B cell (primary cell): ENCODE measurements at regions of chr19 and their contacts with region 1.

Region 1: DNA sequence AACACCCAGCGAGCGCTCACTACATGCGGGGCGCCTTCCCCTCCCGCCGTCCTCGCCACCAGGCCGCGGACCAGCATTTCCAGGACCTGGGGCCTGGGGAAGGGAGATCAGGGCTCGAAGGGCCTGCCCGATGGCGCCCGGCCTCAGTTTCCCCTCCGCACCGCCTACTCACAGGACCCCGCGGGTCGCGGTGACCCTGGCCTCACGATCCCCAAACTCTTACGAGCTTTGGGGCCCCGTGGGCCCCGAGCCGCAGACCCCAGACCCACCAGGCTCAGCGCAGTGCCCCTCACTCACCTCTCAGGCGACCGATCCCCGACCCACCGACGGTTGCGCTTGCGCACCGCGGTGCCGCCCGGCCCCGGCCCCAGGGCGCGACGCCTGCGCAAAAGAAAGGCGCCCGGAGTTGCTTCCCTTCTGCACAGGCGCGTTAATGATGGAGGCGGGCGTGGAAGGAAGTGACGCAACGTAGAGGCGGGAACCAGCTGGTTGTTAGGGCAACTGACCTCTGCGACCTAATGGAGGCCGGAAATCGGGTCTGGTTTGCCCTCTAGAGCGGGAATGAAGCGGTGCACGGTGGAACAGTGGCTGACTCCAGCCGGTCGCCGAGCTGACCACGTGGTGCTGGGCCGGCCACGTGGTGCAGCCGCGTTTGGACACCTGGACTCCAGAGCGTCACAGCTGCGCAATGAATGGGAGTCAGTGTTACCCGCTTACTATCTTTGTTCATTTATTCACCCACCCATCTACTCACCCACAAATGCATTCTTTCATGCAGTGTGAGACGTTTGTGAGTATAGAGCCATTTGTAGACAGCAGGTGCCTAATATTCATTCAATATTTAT is at the start of gene SGTA:
- DNase-seq: peak; percentile 98
- ATAC-seq: peak; percentile 67
- H3K4me3 ChIP-seq: peak within 1 kb of the TSS; percentile 62 to 99 (median 93)
- H3K4me3 Mint-ChIP-seq: peak within 1 kb of the TSS; percentile 91
- H3K27ac ChIP-seq: peak within 1 kb of the TSS; percentile 83 to 95
- H3K27ac Mint-ChIP-seq: peak within 1 kb of the TSS; percentile 97
- H3K4me1 ChIP-seq: peaks cover 23 to 39% of the 10 kb centered on the region in 2 donors
- H3K4me1 Mint-ChIP-seq: peaks cover 60% of the 10 kb centered on the region
- H3K27me3 ChIP-seq: no peaks in the 10 kb centered on the region
- H3K27me3 Mint-ChIP-seq: no peaks in the 10 kb centered on the region
- CTCF ChIP-seq: peak; percentile 59
- total RNA-seq, gene SGTA: 36.6 and 39.8 TPM in 2 replicates

Region 2: GRCh38 chr19:2427429-2428320 is 355.5 kb before region 1 on chr19 and contains the start of gene TIMM13:
- CTCF ChIA-PET with region 1: no interaction called
- POLR2A ChIA-PET with region 1: interaction called, 3 read pairs
- intact Hi-C with region 1: loop called (anchors 1 kb)
- DNase-seq: peak; percentile 99
- ATAC-seq: peak; percentile 93
- H3K4me3 ChIP-seq: peak within 1 kb of the TSS; percentile 57 to 90 (median 74)
- H3K4me3 Mint-ChIP-seq: peak within 1 kb of the TSS; percentile 96
- H3K27ac ChIP-seq: peak within 1 kb of the TSS; percentile 75 to 80
- H3K27ac Mint-ChIP-seq: peak within 1 kb of the TSS; percentile 98
- H3K4me1 ChIP-seq: peaks cover 15 to 21% of the 10 kb centered on the region in 2 donors
- H3K4me1 Mint-ChIP-seq: peaks cover 13% of the 10 kb centered on the region
- H3K27me3 ChIP-seq: no peaks in the 10 kb centered on the region
- H3K27me3 Mint-ChIP-seq: no peaks in the 10 kb centered on the region
- CTCF ChIP-seq: no peak
- total RNA-seq, gene TIMM13: 31.9 and 32.5 TPM in 2 replicates

Region 3: GRCh38 chr19:2663920-2664571 is 119.1 kb before region 1 on chr19:
- CTCF ChIA-PET with region 1: interaction called, 3 read pairs
- POLR2A ChIA-PET with region 1: no interaction called
- intact Hi-C with region 1: loop called (anchors 1 kb)
- DNase-seq: peak; percentile 95
- ATAC-seq: peak; percentile 86
- H3K4me3 ChIP-seq: no peak overlapping the region
- H3K4me3 Mint-ChIP-seq: peak overlapping the region; percentile 78
- H3K27ac ChIP-seq: peak overlapping the region; percentile 92
- H3K27ac Mint-ChIP-seq: peak overlapping the region; percentile 98
- H3K4me1 ChIP-seq: peaks cover 35 to 43% of the 10 kb centered on the region in 2 donors
- H3K4me1 Mint-ChIP-seq: peaks cover 59% of the 10 kb centered on the region
- H3K27me3 ChIP-seq: no peaks in the 10 kb centered on the region
- H3K27me3 Mint-ChIP-seq: no peaks in the 10 kb centered on the region
- CTCF ChIP-seq: peak; percentile 75

Region 4: DNA sequence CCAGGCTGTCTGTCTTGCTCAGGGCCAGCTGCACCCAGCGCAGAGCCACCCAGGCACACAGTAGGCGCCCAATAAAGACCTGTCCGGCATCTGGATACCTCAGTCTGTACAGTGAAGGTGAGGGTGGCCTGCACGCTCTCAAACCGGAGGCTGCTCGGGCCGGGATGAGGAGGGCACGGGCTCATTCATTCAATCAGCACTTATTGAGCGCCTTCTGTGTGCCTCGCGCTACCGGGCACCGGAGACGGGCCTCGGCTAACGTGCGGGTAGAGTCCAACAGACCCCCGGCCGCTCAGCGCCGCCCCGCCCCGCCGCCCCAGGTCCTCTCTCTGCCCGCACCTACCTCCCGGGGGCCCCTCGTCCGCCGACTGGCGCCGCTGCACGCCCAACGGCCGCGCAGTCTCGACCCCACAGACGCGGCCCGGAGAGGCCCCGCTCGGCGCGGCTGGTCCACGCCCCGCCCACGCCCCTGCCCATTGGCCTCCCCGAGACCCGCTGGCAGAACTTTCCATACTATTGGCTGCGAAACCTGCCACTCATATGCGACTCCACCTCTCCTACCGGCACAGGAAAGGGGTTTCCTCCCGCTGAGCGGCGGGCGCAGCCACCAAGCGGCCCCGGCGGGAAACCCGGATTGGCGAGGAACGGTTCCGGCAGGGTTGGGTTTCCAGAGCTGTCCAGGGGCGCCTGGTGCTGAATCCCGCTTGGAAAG is 43.4 kb before region 1 on chr19 and contains the start of gene SLC39A3:
- CTCF ChIA-PET with region 1: no interaction called
- POLR2A ChIA-PET with region 1: no interaction called
- intact Hi-C with region 1: loop called (anchors 1 kb)
- DNase-seq: peak; percentile 98
- ATAC-seq: peak; percentile 100
- H3K4me3 ChIP-seq: peak within 1 kb of the TSS; percentile 50 to 93 (median 87)
- H3K4me3 Mint-ChIP-seq: peak within 1 kb of the TSS; percentile 92
- H3K27ac ChIP-seq: peak within 1 kb of the TSS; percentile 26 to 77
- H3K27ac Mint-ChIP-seq: peak within 1 kb of the TSS; percentile 81
- H3K4me1 ChIP-seq: peaks cover 10 to 20% of the 10 kb centered on the region in 2 donors
- H3K4me1 Mint-ChIP-seq: peaks cover 25% of the 10 kb centered on the region
- H3K27me3 ChIP-seq: no peaks in the 10 kb centered on the region
- H3K27me3 Mint-ChIP-seq: peaks cover 10% of the 10 kb centered on the region
- CTCF ChIP-seq: no peak
- total RNA-seq, gene SLC39A3: 32.8 and 36.4 TPM in 2 replicates

Region 5: DNA sequence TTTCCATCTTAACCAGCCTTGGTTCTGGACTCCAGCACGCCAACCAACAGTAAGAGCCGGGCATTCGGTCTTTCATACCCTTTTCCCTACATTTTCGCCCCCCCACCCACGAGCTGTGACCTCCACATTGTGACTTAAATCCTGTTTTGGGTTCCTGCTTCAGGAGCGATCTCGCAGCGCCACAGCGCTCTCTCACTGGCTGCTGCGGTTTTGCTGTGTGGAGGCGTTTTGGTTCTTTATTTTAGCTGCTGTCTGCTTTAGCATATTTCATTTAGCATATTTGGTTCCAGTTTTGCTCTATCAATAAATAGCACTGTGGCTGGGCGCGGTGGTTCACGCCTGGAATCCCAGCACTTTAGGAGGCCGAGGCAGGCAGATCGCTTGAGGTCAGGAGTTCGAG is 23.8 kb before region 1 on chr19:
- CTCF ChIA-PET with region 1: no interaction called
- POLR2A ChIA-PET with region 1: no interaction called
- intact Hi-C with region 1: no loop called
- DNase-seq: no peak
- ATAC-seq: no peak
- H3K4me3 ChIP-seq: no peak overlapping the region
- H3K4me3 Mint-ChIP-seq: no peak overlapping the region
- H3K27ac ChIP-seq: no peak overlapping the region
- H3K27ac Mint-ChIP-seq: no peak overlapping the region
- H3K4me1 ChIP-seq: no peaks in the 10 kb centered on the region
- H3K4me1 Mint-ChIP-seq: no peaks in the 10 kb centered on the region
- H3K27me3 ChIP-seq: no peaks in the 10 kb centered on the region
- H3K27me3 Mint-ChIP-seq: no peaks in the 10 kb centered on the region
- CTCF ChIP-seq: no peak

Region 6: DNA sequence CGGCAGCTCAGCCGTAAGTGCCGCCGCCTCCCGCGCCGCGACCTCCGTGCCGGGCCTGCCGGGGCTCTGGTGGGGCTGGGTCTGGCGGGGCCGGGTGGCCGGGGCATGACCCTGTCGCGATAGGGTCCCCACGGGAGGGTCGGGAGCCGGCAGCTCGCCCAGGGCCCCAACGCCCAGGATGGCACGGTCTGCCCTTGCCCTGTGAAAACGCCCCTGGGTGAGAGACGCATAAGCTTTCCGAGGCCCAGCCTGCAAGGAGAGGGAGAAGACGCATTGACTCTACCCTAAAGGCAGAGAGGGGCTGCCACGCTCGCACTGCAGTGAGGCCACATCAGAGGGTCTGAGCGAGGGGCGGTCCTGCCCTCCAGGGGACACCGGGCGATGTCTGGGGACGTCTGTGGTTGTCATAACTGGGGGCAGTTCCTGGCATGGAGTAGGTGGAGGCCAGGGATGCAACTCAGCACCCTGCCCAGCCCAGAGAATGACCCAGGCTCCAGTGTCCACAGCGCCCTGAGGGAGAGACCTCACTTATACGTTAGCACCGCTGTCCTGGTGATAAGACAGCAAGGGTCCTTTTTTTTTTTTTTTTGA is 37.0 kb after region 1 on chr19:
- CTCF ChIA-PET with region 1: interaction called, 3 read pairs
- POLR2A ChIA-PET with region 1: no interaction called
- intact Hi-C with region 1: loop called (anchors 1 kb)
- DNase-seq: no peak
- ATAC-seq: no peak
- H3K4me3 ChIP-seq: peak overlapping the region; percentile 19 to 81 (median 60)
- H3K4me3 Mint-ChIP-seq: peak overlapping the region; percentile 85
- H3K27ac ChIP-seq: no peak overlapping the region
- H3K27ac Mint-ChIP-seq: no peak overlapping the region
- H3K4me1 ChIP-seq: peaks cover 4 to 18% of the 10 kb centered on the region in 2 donors
- H3K4me1 Mint-ChIP-seq: peaks cover 9% of the 10 kb centered on the region
- H3K27me3 ChIP-seq: no peaks in the 10 kb centered on the region
- H3K27me3 Mint-ChIP-seq: no peaks in the 10 kb centered on the region
- CTCF ChIP-seq: no peak

Region 7: DNA sequence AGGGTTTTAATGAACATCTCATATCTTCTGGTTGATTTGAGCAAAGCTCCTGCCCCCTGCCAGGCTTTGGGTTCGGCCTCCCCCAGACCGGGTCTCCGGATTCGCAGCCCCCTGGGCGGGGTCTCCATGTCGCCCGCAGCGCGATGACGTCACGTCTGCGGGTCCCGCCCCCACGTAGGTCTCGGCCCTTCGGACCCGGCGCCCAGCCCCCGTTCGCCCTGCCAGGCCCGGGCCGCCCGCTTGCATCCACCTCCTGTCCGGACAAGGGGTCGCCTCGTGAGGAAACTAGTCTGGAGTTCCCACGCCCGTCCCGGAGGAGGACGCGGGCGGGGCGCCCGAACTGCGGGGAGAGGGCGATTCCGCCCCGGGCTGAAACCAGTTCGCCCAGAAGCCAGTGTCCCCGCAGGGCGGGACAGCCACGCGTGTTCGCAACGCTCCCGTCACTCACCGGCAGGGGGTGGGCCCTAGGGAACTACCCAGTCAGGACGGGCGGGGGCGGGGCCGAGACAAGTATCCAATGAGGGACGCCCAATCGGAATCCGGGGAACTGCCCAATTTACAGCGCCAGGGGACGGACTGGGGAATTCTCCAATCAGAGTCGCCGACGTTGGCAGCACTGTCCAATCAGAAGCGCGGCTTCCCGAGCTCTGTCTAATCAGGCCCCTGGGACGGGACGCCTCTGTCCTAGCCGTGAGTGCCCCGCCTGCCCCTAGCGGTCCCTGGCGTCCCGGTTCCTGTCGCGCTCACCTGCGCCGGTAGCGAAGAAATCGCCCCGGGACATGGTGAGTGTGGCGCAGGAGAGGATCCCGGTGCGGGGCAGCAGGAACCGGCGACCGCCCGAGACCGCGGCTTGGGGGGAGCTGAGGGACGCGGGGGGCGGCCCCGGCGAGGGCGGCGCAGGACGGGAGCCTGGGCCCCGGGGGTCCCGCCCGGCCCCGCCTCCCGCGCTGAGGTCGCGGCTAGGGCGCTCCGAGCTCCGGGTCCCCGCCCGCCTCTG is 57.9 kb after region 1 on chr19 and contains the start of gene ZNF555:
- CTCF ChIA-PET with region 1: interaction called, 4 read pairs
- POLR2A ChIA-PET with region 1: interaction called, 3 read pairs
- intact Hi-C with region 1: loop called (anchors 1 kb)
- DNase-seq: peak; percentile 99
- ATAC-seq: peak; percentile 93
- H3K4me3 ChIP-seq: peak within 1 kb of the TSS; percentile 34 to 77 (median 73)
- H3K4me3 Mint-ChIP-seq: peak within 1 kb of the TSS; percentile 95
- H3K27ac ChIP-seq: peak within 1 kb of the TSS; percentile 83 to 86
- H3K27ac Mint-ChIP-seq: peak within 1 kb of the TSS; percentile 95
- H3K4me1 ChIP-seq: peaks cover 12 to 15% of the 10 kb centered on the region in 2 donors
- H3K4me1 Mint-ChIP-seq: peaks cover 26% of the 10 kb centered on the region
- H3K27me3 ChIP-seq: no peaks in the 10 kb centered on the region
- H3K27me3 Mint-ChIP-seq: no peaks in the 10 kb centered on the region
- CTCF ChIP-seq: peak; percentile 74
- total RNA-seq, gene ZNF555: 7.4 and 9.7 TPM in 2 replicates

Region 8: GRCh38 chr19:2900296-2901252 is 117.4 kb after region 1 on chr19 and contains the start of gene ZNF57:
- CTCF ChIA-PET with region 1: no interaction called
- POLR2A ChIA-PET with region 1: interaction called, 4 read pairs
- intact Hi-C with region 1: loop called (anchors 1 kb)
- DNase-seq: peak; percentile 98
- ATAC-seq: peak; percentile 99
- H3K4me3 ChIP-seq: peak within 1 kb of the TSS in 4 of 5 experiments; percentile 65 to 86 (median 74)
- H3K4me3 Mint-ChIP-seq: peak within 1 kb of the TSS; percentile 99
- H3K27ac ChIP-seq: peak within 1 kb of the TSS in 1 of 2 donors; percentile 68
- H3K27ac Mint-ChIP-seq: peak within 1 kb of the TSS; percentile 94
- H3K4me1 ChIP-seq: peaks cover 6 to 14% of the 10 kb centered on the region in 2 donors
- H3K4me1 Mint-ChIP-seq: peaks cover 18% of the 10 kb centered on the region
- H3K27me3 ChIP-seq: no peaks in the 10 kb centered on the region
- H3K27me3 Mint-ChIP-seq: no peaks in the 10 kb centered on the region
- CTCF ChIP-seq: no peak
- total RNA-seq, gene ZNF57: 3.4 and 3.8 TPM in 2 replicates